PC-9 (cell line): ENCODE measurements at regions of chr12 and their contacts with region 1.

Region 1: DNA sequence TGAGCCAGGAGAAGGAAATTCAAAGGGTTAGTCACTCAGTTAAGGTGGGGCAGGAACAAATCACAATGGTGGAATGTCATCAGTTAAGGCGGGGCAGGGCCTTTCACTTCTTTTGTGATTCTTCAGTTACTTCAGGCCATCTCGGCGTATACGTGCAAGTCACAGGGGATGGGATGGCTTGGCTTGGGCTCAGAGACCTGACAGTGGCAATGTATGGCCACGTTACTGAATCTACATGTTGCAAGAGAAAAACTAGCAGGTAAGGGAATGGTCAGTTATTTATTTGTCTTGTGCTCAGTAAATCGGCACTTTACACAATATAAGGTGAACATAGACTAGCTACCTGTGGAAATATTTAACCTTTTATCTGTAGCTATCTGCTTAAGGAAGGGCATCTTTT is 11.9 kb downstream of the SLCO1B3 start:
- DNase-seq: peak; percentile 64 to 82
- H3K4me3 ChIP-seq: peak overlapping the region; percentile 41
- H3K27ac ChIP-seq: peak overlapping the region; percentile 64
- H3K4me1 ChIP-seq: peaks cover 7% of the 10 kb centered on the region; the same call in 1 of the 2 replicates
- H3K27me3 ChIP-seq: no peaks in the 10 kb centered on the region
- CTCF ChIP-seq: no peak

Region 2: DNA sequence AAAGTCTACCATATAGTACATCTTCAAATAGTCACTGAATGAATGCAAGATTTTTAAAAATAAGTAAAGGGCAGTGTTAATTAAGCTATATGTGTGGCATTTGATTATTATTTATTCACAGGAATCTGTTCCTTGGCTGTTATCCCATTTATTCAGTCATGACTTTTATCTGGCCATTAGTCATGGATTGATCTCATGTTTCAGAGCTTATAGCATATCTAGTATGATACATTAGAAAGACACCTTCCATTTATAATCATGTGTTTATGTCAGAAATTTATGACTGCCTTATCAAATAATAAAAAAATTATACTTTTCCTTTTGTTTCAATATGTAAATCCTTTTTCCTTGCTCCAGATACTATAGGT is 702.1 kb before region 1 on chr12:
- CTCF ChIA-PET with region 1: no interaction called
- POLR2A ChIA-PET with region 1: no interaction called
- intact Hi-C with region 1: no loop called
- DNase-seq: no peak
- H3K4me3 ChIP-seq: no peak overlapping the region
- H3K27ac ChIP-seq: no peak overlapping the region
- H3K4me1 ChIP-seq: no peaks in the 10 kb centered on the region
- H3K27me3 ChIP-seq: no peaks in the 10 kb centered on the region
- CTCF ChIP-seq: no peak

Region 3: GRCh38 chr12:21073822-21074460 is 251.5 kb after region 1 on chr12:
- CTCF ChIA-PET with region 1: no interaction called
- POLR2A ChIA-PET with region 1: no interaction called
- intact Hi-C with region 1: loop called (anchors 5 kb)
- DNase-seq: peak; percentile 67 to 72
- H3K4me3 ChIP-seq: no peak overlapping the region
- H3K27ac ChIP-seq: peak overlapping the region; percentile 86
- H3K4me1 ChIP-seq: peaks cover 20% of the 10 kb centered on the region
- H3K27me3 ChIP-seq: no peaks in the 10 kb centered on the region
- CTCF ChIP-seq: peak; percentile 45